ENCODE measurements at regions of chr15 and their contacts with region 1.

Region 1: DNA sequence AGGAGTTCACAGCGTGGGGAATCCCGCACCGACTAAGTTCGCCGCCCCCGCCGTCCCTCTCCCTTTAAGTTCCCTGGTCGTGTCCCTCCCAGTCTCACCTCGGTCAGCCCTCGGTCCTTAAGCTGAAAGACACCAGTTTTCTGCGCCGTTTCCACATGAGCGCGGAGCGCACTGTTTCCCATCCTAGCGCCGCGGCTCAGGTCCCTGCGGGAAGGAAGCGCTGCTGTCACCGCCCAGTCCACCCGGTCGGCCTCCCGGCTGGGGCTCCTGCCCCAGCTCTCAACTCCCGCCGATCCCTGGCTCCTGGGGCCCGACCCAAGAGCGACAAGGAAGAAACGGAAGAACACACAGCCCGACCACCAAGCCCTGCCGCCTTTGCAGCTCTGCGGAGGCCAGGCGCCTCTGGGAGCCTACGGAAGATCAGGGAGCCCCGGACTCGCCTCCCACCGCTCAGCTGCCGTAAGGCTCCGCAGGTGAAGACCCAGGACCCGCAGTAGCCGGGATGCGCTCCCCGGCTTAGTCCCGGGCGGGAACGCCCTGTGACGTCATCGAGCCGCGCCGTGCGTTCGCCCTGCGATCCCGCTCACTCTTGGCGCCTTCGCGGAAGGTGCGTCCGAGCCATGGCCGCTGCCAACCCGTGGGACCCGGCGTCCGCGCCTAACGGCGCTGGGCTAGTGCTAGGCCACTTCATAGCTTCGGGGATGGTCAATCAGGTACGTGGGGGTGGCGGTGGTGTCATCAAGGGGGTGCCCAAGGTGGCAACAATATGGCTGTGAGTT is at the starts of genes HAUS2 and LRRC57:
- DNase-seq: peak; percentile 88
- ATAC-seq: peak; percentile 95
- H3K4me3 Mint-ChIP-seq: peak within 1 kb of the TSS; percentile 89
- H3K27ac Mint-ChIP-seq: peak within 1 kb of the TSS; percentile 93
- H3K4me1 Mint-ChIP-seq: peaks cover 53% of the 10 kb centered on the region
- H3K27me3 Mint-ChIP-seq: no peaks in the 10 kb centered on the region
- total RNA-seq, gene HAUS2: 42.2 to 44.7 TPM
- total RNA-seq, gene LRRC57: 28.2 to 30.4 TPM

Region 2: DNA sequence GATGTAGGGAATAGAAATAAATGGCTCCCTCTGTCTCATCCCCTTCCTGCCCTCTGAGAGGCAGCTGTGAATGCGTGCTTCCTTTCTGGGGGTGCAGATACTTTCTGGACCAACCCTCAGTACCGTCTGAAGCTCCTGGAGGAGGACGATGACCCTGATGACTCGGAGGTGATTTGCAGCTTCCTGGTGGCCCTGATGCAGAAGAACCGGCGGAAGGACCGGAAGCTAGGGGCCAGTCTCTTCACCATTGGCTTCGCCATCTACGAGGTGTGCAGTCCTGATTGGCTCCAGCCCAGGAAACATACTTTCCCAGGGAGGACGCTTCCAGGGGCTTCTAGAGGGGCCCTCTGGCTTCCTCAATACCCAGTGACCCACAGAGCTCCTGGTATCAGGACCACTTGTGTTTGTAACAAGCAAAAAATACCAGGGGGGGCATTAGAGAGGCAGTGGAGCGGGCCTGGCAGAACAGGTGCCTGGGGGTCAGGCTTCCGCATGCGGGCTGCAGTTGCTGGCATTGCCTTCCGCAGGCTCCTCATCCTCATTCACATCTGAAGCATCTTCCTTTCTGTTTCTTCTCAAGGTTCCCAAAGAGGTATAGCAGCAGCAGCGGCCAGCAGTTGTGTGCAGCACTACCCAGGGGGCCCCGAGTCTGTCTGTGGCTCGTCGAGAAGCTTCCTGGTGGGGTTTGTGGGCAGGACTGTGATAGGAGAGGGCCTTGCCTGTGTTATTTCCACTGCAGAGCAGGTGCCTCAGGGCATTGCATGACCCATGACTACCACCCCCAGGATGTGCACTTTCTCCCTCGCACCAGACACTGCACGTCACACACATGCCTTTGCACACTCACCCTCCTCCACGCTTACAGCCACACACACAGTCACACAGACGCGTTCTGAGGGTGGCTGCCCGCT is 146.6 kb before region 1 on chr15:
- CTCF ChIA-PET with region 1: no interaction called
- POLR2A ChIA-PET with region 1: no interaction called
- DNase-seq: peak; percentile 50
- ATAC-seq: peak; percentile 80
- H3K4me3 Mint-ChIP-seq: peak overlapping the region; percentile 44
- H3K27ac Mint-ChIP-seq: peak overlapping the region; percentile 80
- H3K4me1 Mint-ChIP-seq: peaks cover 31% of the 10 kb centered on the region
- H3K27me3 Mint-ChIP-seq: no peaks in the 10 kb centered on the region

Region 3: DNA sequence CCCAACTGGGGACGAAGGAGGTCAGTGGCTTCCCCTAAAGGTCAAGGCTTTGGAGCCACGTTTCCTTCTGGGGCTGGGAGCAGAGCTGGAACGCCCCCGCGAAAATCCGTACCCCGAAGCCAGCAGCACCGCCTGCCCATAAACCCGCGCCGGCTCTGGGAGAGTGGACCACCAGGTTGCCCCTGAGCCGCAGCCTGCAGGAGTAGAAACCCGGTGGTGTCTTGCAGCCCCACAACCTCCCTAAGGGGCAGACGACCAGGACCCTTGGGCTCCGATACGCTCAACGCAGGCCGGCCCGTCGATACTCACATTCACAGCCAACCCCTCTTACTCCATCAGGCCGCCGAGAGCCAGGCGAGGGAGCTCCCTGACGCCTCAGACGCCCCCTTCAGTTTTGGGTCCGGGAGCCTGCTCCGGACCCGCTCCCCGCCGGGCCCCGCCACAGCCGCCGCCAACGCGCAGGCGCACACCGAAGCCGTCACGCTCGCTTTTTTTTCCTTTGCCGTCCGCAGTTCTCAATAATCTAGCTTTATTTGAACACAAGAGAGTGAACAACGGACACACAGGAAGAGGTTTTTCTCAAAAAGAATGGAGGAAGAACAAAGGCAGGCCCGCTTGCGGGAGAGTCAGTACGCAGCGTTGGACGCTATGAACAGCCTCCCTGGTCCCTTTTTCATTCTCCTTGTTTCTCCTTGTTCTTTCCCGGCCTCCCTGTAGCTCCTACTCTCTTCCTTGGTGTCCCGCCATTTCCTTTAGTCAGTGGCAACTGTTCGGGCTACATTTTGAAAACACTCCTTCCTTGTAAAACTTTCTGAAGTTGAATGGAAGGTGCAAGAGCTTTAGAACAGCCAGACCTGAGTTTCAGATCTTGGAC is 57.5 kb before region 1 on chr15 and contains the start of gene ZNF106:
- CTCF ChIA-PET with region 1: interaction called, 8 read pairs
- POLR2A ChIA-PET with region 1: interaction called, 14 read pairs
- DNase-seq: peak; percentile 91
- ATAC-seq: peak; percentile 67
- H3K4me3 Mint-ChIP-seq: peak within 1 kb of the TSS; percentile 91
- H3K27ac Mint-ChIP-seq: peak within 1 kb of the TSS; percentile 97
- H3K4me1 Mint-ChIP-seq: peaks cover 41% of the 10 kb centered on the region
- H3K27me3 Mint-ChIP-seq: no peaks in the 10 kb centered on the region
- total RNA-seq, gene ZNF106: 42.2 to 43.3 TPM

Region 4: GRCh38 chr15:42575188-42576039 is 27.0 kb after region 1 on chr15 and contains the start of gene STARD9:
- CTCF ChIA-PET with region 1: no interaction called
- POLR2A ChIA-PET with region 1: interaction called, 16 read pairs
- DNase-seq: peak; percentile 97
- ATAC-seq: peak; percentile 94
- H3K4me3 Mint-ChIP-seq: peak within 1 kb of the TSS; percentile 95
- H3K27ac Mint-ChIP-seq: peak within 1 kb of the TSS; percentile 91
- H3K4me1 Mint-ChIP-seq: peaks cover 35% of the 10 kb centered on the region
- H3K27me3 Mint-ChIP-seq: peaks cover 13% of the 10 kb centered on the region
- total RNA-seq, gene STARD9: 12.8 to 13.0 TPM